ENCODE measurements at regions of chr10 and their contacts with region 1.

Region 1: GRCh38 chr10:110746254-110746826 is 102.2 kb downstream of the RBM20 start:
- DNase-seq: peak; percentile 56
- ATAC-seq: peak; percentile 90
- H3K4me3 ChIP-seq: no peak overlapping the region
- H3K27ac ChIP-seq: no peak overlapping the region
- H3K4me1 ChIP-seq: peaks cover 14% of the 10 kb centered on the region
- H3K27me3 ChIP-seq: 0 out of 5 replicates have a peak, but pooled peaks cover 0 to 3% of the 10 kb centered on the region in 2 experiments
- CTCF ChIP-seq: peak; percentile 85
- EP300 ChIP-seq: no peak
- POLR2A ChIP-seq: no peak
- RAD21 ChIP-seq: peak; percentile 86

Region 2: DNA sequence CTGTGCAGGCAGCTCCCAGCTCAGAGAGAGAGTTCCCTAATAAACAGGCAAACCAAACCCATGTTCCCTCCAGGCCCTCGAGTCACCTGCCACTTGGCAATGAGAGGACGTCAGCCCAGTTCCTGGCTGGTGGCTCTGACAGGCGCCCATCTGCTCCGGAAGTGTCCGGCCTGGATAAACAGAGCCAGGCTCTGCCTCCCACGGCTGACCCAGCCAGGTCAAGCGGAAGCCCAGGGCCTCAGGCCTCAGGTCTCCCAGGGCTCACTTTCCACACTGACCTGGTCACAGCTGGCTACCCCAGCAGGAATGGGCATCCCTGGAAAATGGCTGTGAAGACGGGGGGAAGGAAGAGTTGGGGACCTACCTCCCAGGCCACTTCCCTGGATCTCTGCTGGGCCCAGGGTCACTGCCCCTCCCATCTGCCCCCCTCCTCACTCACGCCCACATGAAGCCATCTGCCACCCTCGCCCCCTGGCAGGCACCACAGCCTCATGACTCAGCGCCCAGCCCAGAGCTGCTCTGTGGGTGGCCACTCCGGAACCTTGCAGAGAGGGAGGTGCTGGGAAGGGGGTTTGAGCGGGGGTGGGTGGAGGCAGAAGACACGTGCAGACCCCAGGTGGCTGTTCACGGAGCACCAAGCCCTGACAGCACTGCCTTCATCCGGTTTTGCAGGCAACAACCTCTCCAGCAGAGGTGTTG is 286.1 kb before region 1 on chr10:
- CTCF ChIA-PET with region 1: no interaction called
- POLR2A ChIA-PET with region 1: no interaction called
- in situ Hi-C with region 1: no loop called
- intact Hi-C with region 1: no loop called
- DNase-seq: peak; percentile 32
- ATAC-seq: peak; percentile 84
- H3K4me3 ChIP-seq: peak overlapping the region in 1 of 3 experiments; percentile 43; a peak in 1 of 6 replicates
- H3K27ac ChIP-seq: no peak overlapping the region
- H3K4me1 ChIP-seq: peaks cover 35% of the 10 kb centered on the region
- H3K27me3 ChIP-seq: peaks cover 2 to 18% of the 10 kb centered on the region in 2 experiments; a peak in 3 of 5 replicates
- CTCF ChIP-seq: no peak
- EP300 ChIP-seq: no peak
- POLR2A ChIP-seq: no peak
- RAD21 ChIP-seq: no peak

Region 3: GRCh38 chr10:111360260-111360925 is 614.1 kb after region 1 on chr10:
- CTCF ChIA-PET with region 1: no interaction called
- POLR2A ChIA-PET with region 1: no interaction called
- in situ Hi-C with region 1: loop called (anchors 25 kb)
- intact Hi-C with region 1: loop called (anchors 1 kb)
- DNase-seq: peak; percentile 69
- ATAC-seq: peak; percentile 100
- H3K4me3 ChIP-seq: no peak overlapping the region
- H3K27ac ChIP-seq: no peak overlapping the region
- H3K4me1 ChIP-seq: no peaks in the 10 kb centered on the region
- H3K27me3 ChIP-seq: peaks cover 0 to 6% of the 10 kb centered on the region in 2 experiments; a peak in 1 of 5 replicates
- CTCF ChIP-seq: peak; percentile 78
- EP300 ChIP-seq: no peak
- POLR2A ChIP-seq: no peak
- RAD21 ChIP-seq: peak; percentile 77

Measured in HepG2 (cell line).